ENCODE measurements at regions of chr12 and their contacts with region 1.

Region 1: GRCh38 chr12:12716793-12717585 is at the start of gene CDKN1B:
- DNase-seq: peak; percentile 98
- ATAC-seq: peak; percentile 97
- total RNA-seq, gene CDKN1B: 38.0 TPM

Region 2: GRCh38 chr12:12592930-12593329 is 124.1 kb before region 1 on chr12:
- intact Hi-C with region 1: no loop called
- DNase-seq: no peak
- ATAC-seq: no peak

Region 3: GRCh38 chr12:12611512-12612306 is 105.3 kb before region 1 on chr12 and contains the start of gene CREBL2:
- intact Hi-C with region 1: loop called (anchors 5 kb)
- DNase-seq: peak; percentile 96
- ATAC-seq: peak; percentile 98
- total RNA-seq, gene CREBL2: 15.9 TPM

Region 4: GRCh38 chr12:12696562-12697383 is 20.2 kb before region 1 on chr12:
- intact Hi-C with region 1: loop called (anchors 2 kb)
- DNase-seq: peak; percentile 97
- ATAC-seq: peak; percentile 94